ENCODE measurements at regions of chr11 and their contacts with region 1.

Region 1: GRCh38 chr11:46896719-46897406 is 21.5 kb downstream of the LRP4 start:
- DNase-seq: no peak
- H3K4me3 ChIP-seq: no peak overlapping the region
- H3K27ac ChIP-seq: no peak overlapping the region
- H3K4me1 ChIP-seq: peaks cover 37% of the 10 kb centered on the region
- H3K27me3 ChIP-seq: no peaks in the 10 kb centered on the region
- CTCF ChIP-seq: peak; percentile 53

Region 2: DNA sequence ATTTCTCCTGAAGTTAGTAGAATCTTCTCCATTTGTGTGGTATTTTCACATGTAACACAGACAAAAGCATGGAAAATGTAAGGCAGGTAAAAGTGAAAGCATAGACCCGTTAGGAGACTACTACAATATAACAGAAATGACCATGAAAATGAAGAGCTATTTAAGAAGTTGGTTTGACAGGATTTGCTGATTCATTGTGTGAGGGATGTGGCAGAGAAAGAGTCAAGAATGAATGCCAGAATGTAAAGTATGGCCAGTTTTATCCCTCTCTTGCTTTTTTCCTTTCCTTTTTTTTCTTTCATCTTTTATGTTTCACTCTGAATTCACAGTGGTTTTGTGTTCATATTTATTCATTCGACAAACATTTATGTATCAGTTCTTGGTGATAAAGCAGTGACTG is 163.9 kb after region 1 on chr11:
- CTCF ChIA-PET with region 1: interaction called, 11 read pairs
- POLR2A ChIA-PET with region 1: no interaction called
- intact Hi-C with region 1: no loop called
- DNase-seq: peak in 1 of 2 experiments; percentile 18
- H3K4me3 ChIP-seq: no peak overlapping the region
- H3K27ac ChIP-seq: no peak overlapping the region
- H3K4me1 ChIP-seq: no peaks in the 10 kb centered on the region
- H3K27me3 ChIP-seq: no peaks in the 10 kb centered on the region
- CTCF ChIP-seq: no peak

Measured in PC-9 (cell line).